ENCODE measurements at regions of chr14 and their contacts with region 1.

Region 1: GRCh38 chr14:51989293-51990234 is at the start of gene RTRAF:
- DNase-seq: peak; percentile 86 to 93 (median 91)
- ATAC-seq: peak; percentile 98
- H3K4me3 ChIP-seq: peak within 1 kb of the TSS; percentile 60
- H3K4me3 Mint-ChIP-seq: peak within 1 kb of the TSS; percentile 93 to 97 (median 95)
- H3K27ac ChIP-seq: peak within 1 kb of the TSS; percentile 88
- H3K27ac Mint-ChIP-seq: peak within 1 kb of the TSS; percentile 91 to 99 (median 95)
- H3K4me1 ChIP-seq: peaks cover 19 to 22% of the 10 kb centered on the region in 2 donors
- H3K4me1 Mint-ChIP-seq: peaks cover 20 to 57% (median 50%) of the 10 kb centered on the region in 7 donors
- H3K27me3 ChIP-seq: no peaks in the 10 kb centered on the region
- H3K27me3 Mint-ChIP-seq: peaks cover 0 to 4% (median 0%) of the 10 kb centered on the region in 5 donors
- total RNA-seq, gene RTRAF: 112 to 180 (median 116) TPM

Region 2: DNA sequence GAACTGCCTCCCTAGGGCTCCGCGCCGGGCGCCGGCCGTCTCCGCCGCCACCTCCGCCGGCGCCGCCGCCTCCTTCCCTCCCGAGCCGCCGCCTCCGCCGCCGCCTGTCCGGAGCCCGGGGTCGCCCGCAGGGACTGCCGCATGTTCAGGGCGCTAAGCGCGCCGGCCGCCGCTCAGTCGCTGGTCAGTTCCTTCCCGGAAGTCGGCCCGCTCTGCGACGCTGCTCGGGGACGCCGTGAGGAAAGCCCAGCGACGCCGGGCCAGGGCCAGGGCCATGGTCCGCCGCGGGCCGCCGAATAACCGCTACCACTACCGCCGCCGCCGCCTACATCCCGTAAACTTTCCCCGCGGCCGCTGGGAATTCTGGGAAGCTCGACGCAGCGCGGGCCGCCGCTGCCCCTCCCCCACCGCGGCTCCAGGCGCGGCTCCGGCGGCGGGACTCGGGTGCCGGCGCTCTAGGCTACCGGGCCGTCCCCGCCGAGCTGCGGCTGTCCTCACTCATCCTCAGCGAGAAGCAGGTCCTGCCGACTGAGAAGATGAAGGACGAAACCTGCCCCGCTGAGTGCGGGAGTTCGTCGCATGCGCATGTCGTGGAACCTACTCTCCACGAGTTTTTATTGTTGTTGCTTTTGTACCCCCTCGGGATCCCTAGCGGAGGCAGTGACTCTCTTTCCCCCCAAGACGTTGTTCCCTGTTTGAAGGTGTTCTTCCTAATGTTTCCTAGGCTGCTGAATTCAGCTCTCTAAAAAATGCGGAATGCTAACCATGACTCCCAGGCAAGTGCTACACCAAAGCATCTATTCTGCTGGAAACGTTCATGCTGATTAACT is 1321.4 kb before region 1 on chr14 and contains the start of gene SAV1:
- CTCF ChIA-PET with region 1: no interaction called
- POLR2A ChIA-PET with region 1: no interaction called
- intact Hi-C with region 1: loop called in 1 of 2 experiments (anchors 2 kb)
- DNase-seq: peak; percentile 18 to 65 (median 35)
- ATAC-seq: peak; percentile 59
- H3K4me3 ChIP-seq: peak within 1 kb of the TSS; percentile 84
- H3K4me3 Mint-ChIP-seq: peak within 1 kb of the TSS in 2 of 10 donors; percentile 92 to 95
- H3K27ac ChIP-seq: peak within 1 kb of the TSS; percentile 65
- H3K27ac Mint-ChIP-seq: peak within 1 kb of the TSS in 6 of 9 donors; percentile 54 to 94 (median 88)
- H3K4me1 ChIP-seq: peaks cover 0 to 10% of the 10 kb centered on the region in 2 donors
- H3K4me1 Mint-ChIP-seq: peaks cover 11 to 23% (median 20%) of the 10 kb centered on the region in 7 donors
- H3K27me3 ChIP-seq: no peaks in the 10 kb centered on the region
- H3K27me3 Mint-ChIP-seq: peaks cover 0 to 7% (median 0%) of the 10 kb centered on the region in 5 donors
- total RNA-seq, gene SAV1: 7.2 to 9.4 (median 8.7) TPM

Region 3: DNA sequence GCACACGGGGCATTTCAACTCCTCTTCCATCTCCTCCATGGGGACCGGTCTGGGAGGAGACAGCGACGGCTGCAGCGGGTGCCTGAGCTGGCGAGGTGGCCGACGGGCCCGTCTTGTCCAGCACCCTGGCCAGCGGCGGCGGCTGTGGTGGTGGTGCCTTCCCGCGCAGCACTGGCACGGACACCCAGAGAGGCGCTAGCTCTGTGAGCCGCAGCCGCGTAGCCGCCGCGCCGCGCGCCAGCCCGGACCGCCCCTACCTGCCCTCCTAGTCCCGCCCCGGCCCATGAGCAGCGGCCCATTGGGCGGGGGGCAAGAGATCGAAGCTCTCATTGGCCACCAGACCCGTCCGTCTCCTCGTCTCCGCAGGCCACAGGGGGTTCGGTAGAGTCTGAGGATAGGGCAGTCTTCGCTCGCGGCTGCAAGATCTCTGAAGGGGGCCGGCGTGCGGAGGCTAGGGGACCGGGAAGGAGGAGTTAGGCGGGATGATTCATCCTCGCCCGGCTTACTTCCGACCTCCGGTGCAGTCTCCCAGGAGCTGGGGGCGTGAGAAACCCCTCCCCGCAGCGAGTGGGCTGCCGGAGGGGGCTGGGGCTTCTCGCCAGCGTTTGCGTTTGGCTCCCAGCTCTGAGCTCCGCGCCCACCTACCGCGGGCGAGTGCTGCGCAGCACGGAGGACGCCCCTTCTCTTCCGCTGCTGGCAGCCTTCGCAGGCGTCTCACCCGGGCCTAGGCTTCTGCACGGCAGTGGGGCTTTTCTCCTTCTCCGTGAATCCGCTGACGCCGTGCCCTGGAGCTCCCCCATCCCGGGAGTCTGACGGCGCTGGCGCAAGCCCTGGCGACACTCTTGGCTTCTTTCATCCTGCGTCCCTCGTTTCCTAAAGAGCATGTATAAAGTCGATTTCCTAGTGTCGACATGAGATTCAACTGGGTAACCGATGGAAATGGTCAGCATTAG is 894.4 kb before region 1 on chr14 and contains the start of gene TRIM9:
- CTCF ChIA-PET with region 1: no interaction called
- POLR2A ChIA-PET with region 1: no interaction called
- intact Hi-C with region 1: loop called in 1 of 2 experiments (anchors 1 kb)
- DNase-seq: peak; percentile 77 to 93 (median 91)
- ATAC-seq: peak; percentile 96
- H3K4me3 ChIP-seq: peak within 1 kb of the TSS; percentile 83
- H3K4me3 Mint-ChIP-seq: peak within 1 kb of the TSS; percentile 89 to 98 (median 95)
- H3K27ac ChIP-seq: peak within 1 kb of the TSS; percentile 58
- H3K27ac Mint-ChIP-seq: peak within 1 kb of the TSS; percentile 9 to 93 (median 87)
- H3K4me1 ChIP-seq: peaks cover 3 to 8% of the 10 kb centered on the region in 2 donors
- H3K4me1 Mint-ChIP-seq: peaks cover 4 to 18% (median 9%) of the 10 kb centered on the region in 7 donors
- H3K27me3 ChIP-seq: peaks cover 0 to 3% of the 10 kb centered on the region in 2 donors
- H3K27me3 Mint-ChIP-seq: peaks cover 12 to 70% (median 17%) of the 10 kb centered on the region in 5 donors
- total RNA-seq, gene TRIM9: 0.27 to 1.7 (median 0.39) TPM

Region 4: GRCh38 chr14:51534625-51535024 is 454.9 kb before region 1 on chr14:
- CTCF ChIA-PET with region 1: no interaction called
- POLR2A ChIA-PET with region 1: no interaction called
- intact Hi-C with region 1: no loop called
- DNase-seq: no peak
- ATAC-seq: no peak
- H3K4me3 ChIP-seq: no peak overlapping the region
- H3K4me3 Mint-ChIP-seq: no peak overlapping the region
- H3K27ac ChIP-seq: no peak overlapping the region
- H3K27ac Mint-ChIP-seq: no peak overlapping the region
- H3K4me1 ChIP-seq: no peaks in the 10 kb centered on the region
- H3K4me1 Mint-ChIP-seq: no peaks in the 10 kb centered on the region
- H3K27me3 ChIP-seq: no peaks in the 10 kb centered on the region
- H3K27me3 Mint-ChIP-seq: peaks cover 0 to 18% (median 5%) of the 10 kb centered on the region in 5 donors

Region 5: GRCh38 chr14:51738754-51739153 is 250.8 kb before region 1 on chr14:
- CTCF ChIA-PET with region 1: no interaction called
- POLR2A ChIA-PET with region 1: no interaction called
- intact Hi-C with region 1: no loop called
- DNase-seq: no peak
- ATAC-seq: no peak
- H3K4me3 ChIP-seq: no peak overlapping the region
- H3K4me3 Mint-ChIP-seq: no peak overlapping the region
- H3K27ac ChIP-seq: no peak overlapping the region
- H3K27ac Mint-ChIP-seq: no peak overlapping the region
- H3K4me1 ChIP-seq: no peaks in the 10 kb centered on the region
- H3K4me1 Mint-ChIP-seq: peaks cover 0 to 6% (median 0%) of the 10 kb centered on the region in 7 donors
- H3K27me3 ChIP-seq: no peaks in the 10 kb centered on the region
- H3K27me3 Mint-ChIP-seq: peaks cover 0 to 34% (median 7%) of the 10 kb centered on the region in 5 donors

Region 6: DNA sequence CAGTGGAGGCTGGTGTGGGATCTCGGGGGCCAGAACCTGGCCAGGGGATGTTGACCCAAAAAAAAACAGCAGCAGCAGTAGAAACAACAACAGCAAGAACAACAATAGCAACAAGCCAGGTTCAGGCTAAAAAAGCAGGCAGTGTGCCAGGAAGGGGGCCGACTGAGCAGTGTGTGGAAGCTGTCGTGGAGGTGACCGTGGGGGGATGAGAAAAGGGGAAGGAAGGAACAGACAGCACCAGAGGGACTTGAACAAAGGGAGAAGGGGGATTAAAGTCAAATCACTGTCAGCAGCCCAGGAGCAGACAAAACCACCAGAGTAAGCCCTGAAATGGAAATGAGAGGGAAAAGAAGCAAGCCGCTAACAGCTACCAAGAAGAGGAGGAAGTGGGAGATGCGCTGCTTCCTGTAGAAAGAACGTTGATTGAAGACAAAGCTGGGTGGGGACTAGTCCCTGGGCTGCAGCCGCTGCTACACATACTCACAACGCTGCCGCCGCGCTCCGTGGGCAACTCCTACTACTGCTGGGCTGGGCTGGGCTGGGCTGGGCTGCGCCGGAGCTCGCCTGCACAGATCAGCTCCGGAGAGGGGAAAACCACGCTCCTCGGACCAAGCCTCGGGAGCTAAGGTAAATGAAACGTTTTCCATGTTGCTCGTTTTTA is 129.3 kb before region 1 on chr14 and contains the start of gene GNG2:
- CTCF ChIA-PET with region 1: no interaction called
- POLR2A ChIA-PET with region 1: no interaction called
- intact Hi-C with region 1: loop called (anchors 2 to 5 kb)
- DNase-seq: peak; percentile 62 to 87 (median 84)
- ATAC-seq: peak; percentile 98
- H3K4me3 ChIP-seq: peak within 1 kb of the TSS; percentile 65
- H3K4me3 Mint-ChIP-seq: peak within 1 kb of the TSS; percentile 89 to 99 (median 96)
- H3K27ac ChIP-seq: peak within 1 kb of the TSS; percentile 90
- H3K27ac Mint-ChIP-seq: peak within 1 kb of the TSS; percentile 88 to 99 (median 96)
- H3K4me1 ChIP-seq: peaks cover 28 to 45% of the 10 kb centered on the region in 2 donors
- H3K4me1 Mint-ChIP-seq: peaks cover 43 to 78% (median 65%) of the 10 kb centered on the region in 7 donors
- H3K27me3 ChIP-seq: no peaks in the 10 kb centered on the region
- H3K27me3 Mint-ChIP-seq: no peaks in the 10 kb centered on the region
- total RNA-seq, gene GNG2: 62.1 to 199 (median 106) TPM

Region 7: DNA sequence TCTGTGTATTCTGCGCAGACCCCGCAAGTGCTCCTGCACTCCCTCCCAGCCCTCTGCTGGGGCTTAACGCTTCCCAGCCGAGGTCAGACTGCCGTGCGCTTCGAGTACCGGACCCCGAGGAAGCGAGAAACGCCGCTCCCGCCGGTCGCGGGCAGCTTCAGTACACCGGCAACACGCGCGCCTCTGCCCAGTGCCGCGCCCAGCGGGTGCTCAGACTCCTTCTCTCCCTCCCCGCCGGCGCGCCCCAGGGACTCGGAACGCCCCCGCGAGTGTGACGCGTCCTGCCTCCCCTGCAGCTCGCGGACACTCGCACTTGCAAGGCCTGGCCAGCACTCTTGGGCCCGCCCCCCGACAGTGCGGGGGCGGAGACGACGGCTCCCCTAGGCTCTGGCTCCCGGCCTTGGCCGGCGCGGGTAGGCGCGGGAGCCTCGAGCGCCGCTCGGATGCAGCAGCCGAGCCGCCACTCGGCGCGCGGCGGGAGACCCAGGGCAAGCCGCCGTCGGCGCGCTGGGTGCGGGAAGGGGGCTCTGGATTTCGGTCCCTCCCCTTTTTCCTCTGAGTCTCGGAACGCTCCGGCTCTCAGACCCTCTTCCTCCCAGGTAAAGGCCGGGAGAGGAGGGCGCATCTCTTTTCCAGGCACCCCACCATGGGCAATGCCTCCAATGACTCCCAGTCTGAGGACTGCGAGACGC is 324.5 kb after region 1 on chr14 and contains the start of gene PTGER2:
- CTCF ChIA-PET with region 1: no interaction called
- POLR2A ChIA-PET with region 1: no interaction called
- intact Hi-C with region 1: loop called in 1 of 2 experiments (anchors 2 kb)
- DNase-seq: peak; percentile 12 to 91 (median 34)
- ATAC-seq: peak; percentile 79
- H3K4me3 ChIP-seq: peak within 1 kb of the TSS; percentile 80
- H3K4me3 Mint-ChIP-seq: peak within 1 kb of the TSS; percentile 88 to 100 (median 98)
- H3K27ac ChIP-seq: peak within 1 kb of the TSS; percentile 62
- H3K27ac Mint-ChIP-seq: peak within 1 kb of the TSS; percentile 51 to 98 (median 92)
- H3K4me1 ChIP-seq: peaks cover 14 to 26% of the 10 kb centered on the region in 2 donors
- H3K4me1 Mint-ChIP-seq: peaks cover 48 to 81% (median 57%) of the 10 kb centered on the region in 7 donors
- H3K27me3 ChIP-seq: no peaks in the 10 kb centered on the region
- H3K27me3 Mint-ChIP-seq: peaks cover 0 to 5% (median 0%) of the 10 kb centered on the region in 5 donors
- total RNA-seq, gene PTGER2: 1.7 to 162 (median 15.2) TPM

Region 8: GRCh38 chr14:52729925-52730667 is 740.5 kb after region 1 on chr14 and contains the start of gene STYX:
- CTCF ChIA-PET with region 1: no interaction called
- POLR2A ChIA-PET with region 1: no interaction called
- intact Hi-C with region 1: loop called in 1 of 2 experiments (anchors 1 kb)
- DNase-seq: peak; percentile 91 to 97 (median 94)
- ATAC-seq: peak; percentile 99
- H3K4me3 ChIP-seq: peak within 1 kb of the TSS; percentile 88
- H3K4me3 Mint-ChIP-seq: peak within 1 kb of the TSS; percentile 87 to 95 (median 94)
- H3K27ac ChIP-seq: peak within 1 kb of the TSS; percentile 94
- H3K27ac Mint-ChIP-seq: peak within 1 kb of the TSS; percentile 84 to 97 (median 89)
- H3K4me1 ChIP-seq: peaks cover 14 to 16% of the 10 kb centered on the region in 2 donors
- H3K4me1 Mint-ChIP-seq: peaks cover 18 to 40% (median 33%) of the 10 kb centered on the region in 7 donors
- H3K27me3 ChIP-seq: no peaks in the 10 kb centered on the region
- H3K27me3 Mint-ChIP-seq: no peaks in the 10 kb centered on the region
- total RNA-seq, gene STYX: 23.9 to 45.3 (median 29.2) TPM

Region 9: GRCh38 chr14:53055003-53055402 is 1065.4 kb after region 1 on chr14:
- CTCF ChIA-PET with region 1: no interaction called
- POLR2A ChIA-PET with region 1: no interaction called
- intact Hi-C with region 1: loop called in 1 of 2 experiments (anchors 10 kb)
- DNase-seq: peak in 7 of 9 donors; percentile 8 to 47 (median 30)
- ATAC-seq: peak; percentile 76
- H3K4me3 ChIP-seq: no peak overlapping the region
- H3K4me3 Mint-ChIP-seq: no peak overlapping the region
- H3K27ac ChIP-seq: no peak overlapping the region
- H3K27ac Mint-ChIP-seq: peak overlapping the region in 3 of 9 donors; percentile 11 to 40 (median 19)
- H3K4me1 ChIP-seq: no peaks in the 10 kb centered on the region
- H3K4me1 Mint-ChIP-seq: peaks cover 0 to 11% (median 4%) of the 10 kb centered on the region in 7 donors
- H3K27me3 ChIP-seq: no peaks in the 10 kb centered on the region
- H3K27me3 Mint-ChIP-seq: no peaks in the 10 kb centered on the region